H1 (cell line): ENCODE measurements at regions of chr16 and their contacts with region 1.

Region 1: DNA sequence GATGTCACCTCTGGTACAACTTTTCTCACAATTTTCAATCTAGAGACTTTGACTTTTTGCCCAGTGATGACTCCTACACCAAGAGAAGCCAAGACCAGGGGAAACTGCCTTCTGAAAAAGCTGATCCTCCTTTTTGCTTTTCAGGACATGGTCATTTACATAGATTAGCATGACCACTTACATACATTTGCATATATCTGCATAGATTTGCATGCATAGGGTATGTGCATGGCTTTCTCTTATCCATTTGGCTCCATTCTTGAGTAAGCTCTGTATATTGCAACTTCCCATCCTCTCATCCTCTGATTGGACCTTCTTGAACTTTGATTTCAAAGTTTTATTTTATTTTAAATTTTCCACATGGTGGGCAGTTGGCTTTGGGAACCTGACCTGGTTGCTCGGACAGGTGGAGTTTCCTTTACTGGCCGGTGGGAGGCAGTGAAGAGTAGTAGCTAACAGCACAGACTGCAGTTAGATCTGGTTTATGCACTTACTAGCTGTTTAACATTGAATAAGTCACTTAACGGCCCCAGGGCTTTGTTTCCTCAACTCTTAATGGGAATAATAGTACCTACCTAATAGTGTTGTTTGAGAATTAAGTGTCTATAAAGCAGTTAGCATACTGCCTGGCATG is 92.9 kb downstream of the GPR139 start:
- DNase-seq: peak in 1 of 2 experiments; percentile 56
- H3K4me3 ChIP-seq: no peak overlapping the region
- H3K27ac ChIP-seq: no peak overlapping the region
- H3K4me1 ChIP-seq: peaks cover 0 to 4% (median 0%) of the 10 kb centered on the region in 4 experiments; a peak in 3 of 7 replicates
- H3K27me3 ChIP-seq: no peaks in the 10 kb centered on the region
- CTCF ChIP-seq: peak; percentile 68 to 77 (median 75)
- EP300 ChIP-seq: no peak
- POLR2A ChIP-seq: no peak
- RAD21 ChIP-seq: peak; percentile 55 to 71

Region 2: GRCh38 chr16:19860166-19861041 is 120.3 kb before region 1 on chr16:
- CTCF ChIA-PET with region 1: no interaction called
- POLR2A ChIA-PET with region 1: no interaction called
- DNase-seq: peak in 1 of 2 experiments; percentile 78
- H3K4me3 ChIP-seq: peak overlapping the region in 3 of 4 experiments; percentile 8 to 49 (median 18); a peak in 4 of 8 replicates
- H3K27ac ChIP-seq: peak overlapping the region; percentile 83
- H3K4me1 ChIP-seq: peaks cover 18 to 47% (median 40%) of the 10 kb centered on the region in 4 experiments
- H3K27me3 ChIP-seq: no peaks in the 10 kb centered on the region
- CTCF ChIP-seq: no peak
- EP300 ChIP-seq: no peak
- POLR2A ChIP-seq: no peak; a peak in 1 of 3 replicates
- RAD21 ChIP-seq: no peak

Region 3: DNA sequence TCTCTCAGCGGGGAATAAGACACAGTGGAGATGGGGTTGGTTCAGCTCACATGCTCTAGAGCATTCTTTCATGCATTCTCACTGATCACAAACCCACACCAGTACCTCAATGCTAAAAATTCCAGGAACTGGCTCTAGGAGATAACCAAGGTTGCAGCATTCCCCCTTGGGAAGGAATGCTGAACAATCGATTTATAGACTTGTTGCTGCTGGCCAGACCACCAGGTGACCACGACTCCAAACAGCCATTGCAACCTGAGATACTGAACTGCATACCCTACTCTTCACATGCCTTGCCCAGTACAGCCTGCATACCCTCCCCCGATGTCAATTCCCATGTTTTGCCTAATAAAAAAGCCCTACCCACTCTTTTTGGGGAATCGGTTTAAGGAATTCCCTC is 21.0 kb before region 1 on chr16:
- CTCF ChIA-PET with region 1: interaction called, 12 read pairs
- POLR2A ChIA-PET with region 1: no interaction called
- DNase-seq: no peak
- H3K4me3 ChIP-seq: no peak overlapping the region
- H3K27ac ChIP-seq: no peak overlapping the region
- H3K4me1 ChIP-seq: peaks cover 2 to 6% (median 4%) of the 10 kb centered on the region in 4 experiments; a peak in 4 of 7 replicates
- H3K27me3 ChIP-seq: no peaks in the 10 kb centered on the region
- CTCF ChIP-seq: no peak
- EP300 ChIP-seq: no peak
- POLR2A ChIP-seq: no peak
- RAD21 ChIP-seq: no peak

Region 4: DNA sequence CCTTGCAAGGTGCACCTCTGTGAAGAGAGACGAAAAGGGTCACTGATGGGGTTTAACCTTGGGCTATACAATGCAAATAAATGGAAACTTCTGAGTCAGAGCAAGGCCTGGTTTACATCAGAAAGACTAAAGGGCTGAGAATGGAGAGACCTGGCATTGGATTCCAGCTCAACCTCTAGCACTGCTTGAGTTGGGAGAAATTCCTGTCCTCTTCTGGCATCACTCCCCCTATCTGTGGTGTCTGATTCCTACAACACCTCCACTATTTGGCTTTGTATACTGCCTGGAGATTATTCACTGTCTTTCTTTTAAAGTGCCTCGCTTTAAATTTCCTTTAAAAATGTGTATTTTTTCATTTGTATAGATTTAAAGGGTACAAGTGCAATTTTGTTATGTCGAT is 24.2 kb after region 1 on chr16:
- CTCF ChIA-PET with region 1: interaction called, 11 read pairs
- POLR2A ChIA-PET with region 1: no interaction called
- DNase-seq: peak in 1 of 2 experiments; percentile 36
- H3K4me3 ChIP-seq: no peak overlapping the region
- H3K27ac ChIP-seq: no peak overlapping the region
- H3K4me1 ChIP-seq: peaks cover 0 to 5% (median 2%) of the 10 kb centered on the region in 4 experiments; a peak in 4 of 7 replicates
- H3K27me3 ChIP-seq: no peaks in the 10 kb centered on the region
- CTCF ChIP-seq: peak; percentile 29 to 73 (median 60)
- EP300 ChIP-seq: no peak
- POLR2A ChIP-seq: no peak
- RAD21 ChIP-seq: peak; percentile 44 to 69; a peak in 3 of 4 replicates